SK-N-SH (cell line): ENCODE measurements at regions of chr13 and their contacts with region 1.

Region 1: DNA sequence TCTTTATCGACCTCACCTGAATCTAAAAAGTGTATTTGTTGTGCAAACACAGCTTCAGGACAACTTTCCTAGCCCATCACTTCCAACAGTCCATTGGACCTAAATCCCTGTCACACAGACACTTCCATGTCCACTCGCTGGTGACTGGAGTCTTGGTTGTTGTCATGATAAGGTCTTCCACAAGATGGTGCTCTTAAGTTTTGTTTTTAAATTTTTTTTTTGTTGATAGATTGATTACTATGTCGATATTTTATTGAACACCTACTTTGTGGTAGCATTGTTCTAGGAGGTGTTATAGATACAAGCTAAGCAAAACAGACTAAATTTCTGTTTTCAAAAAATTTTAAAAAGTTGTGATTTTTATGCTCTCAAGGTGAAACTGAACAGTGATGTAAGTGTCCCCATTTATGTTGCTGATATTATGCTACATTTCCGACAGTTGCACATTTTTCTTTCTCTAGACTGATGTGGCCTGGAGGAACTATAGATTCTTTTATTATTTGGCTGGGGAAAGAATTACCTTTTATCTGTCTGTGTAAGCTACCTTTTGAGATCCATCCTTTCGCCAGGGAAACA is 8.1 kb upstream of the ERICH6B start:
- DNase-seq: peak; percentile 39
- H3K4me3 ChIP-seq: no peak overlapping the region; a peak in 1 of 4 replicates
- H3K27ac ChIP-seq: no peak overlapping the region
- H3K4me1 ChIP-seq: peaks cover 0 to 5% of the 10 kb centered on the region in 2 experiments; a peak in 2 of 4 replicates
- H3K27me3 ChIP-seq: no peaks in the 10 kb centered on the region
- CTCF ChIP-seq: peak; percentile 69
- EP300 ChIP-seq: no peak
- RAD21 ChIP-seq: peak; percentile 71

Region 2: GRCh38 chr13:45602183-45603170 is 21.1 kb before region 1 on chr13:
- CTCF ChIA-PET with region 1: interaction called, 10 read pairs
- POLR2A ChIA-PET with region 1: no interaction called
- DNase-seq: peak; percentile 46
- H3K4me3 ChIP-seq: no peak overlapping the region
- H3K27ac ChIP-seq: peak overlapping the region in 1 of 2 experiments; percentile 28; a peak in 1 of 4 replicates
- H3K4me1 ChIP-seq: peaks cover 0 to 10% of the 10 kb centered on the region in 2 experiments; a peak in 1 of 4 replicates
- H3K27me3 ChIP-seq: no peaks in the 10 kb centered on the region
- CTCF ChIP-seq: no peak
- EP300 ChIP-seq: peak in 1 of 2 experiments; percentile 37; a peak in 1 of 4 replicates
- RAD21 ChIP-seq: no peak

Region 3: GRCh38 chr13:45718063-45718462 is 94.5 kb after region 1 on chr13:
- CTCF ChIA-PET with region 1: interaction called, 20 read pairs
- POLR2A ChIA-PET with region 1: no interaction called
- DNase-seq: peak; percentile 48
- H3K4me3 ChIP-seq: no peak overlapping the region
- H3K27ac ChIP-seq: no peak overlapping the region
- H3K4me1 ChIP-seq: no peaks in the 10 kb centered on the region
- H3K27me3 ChIP-seq: no peaks in the 10 kb centered on the region
- CTCF ChIP-seq: peak; percentile 62
- EP300 ChIP-seq: no peak
- RAD21 ChIP-seq: peak; percentile 69

Region 4: DNA sequence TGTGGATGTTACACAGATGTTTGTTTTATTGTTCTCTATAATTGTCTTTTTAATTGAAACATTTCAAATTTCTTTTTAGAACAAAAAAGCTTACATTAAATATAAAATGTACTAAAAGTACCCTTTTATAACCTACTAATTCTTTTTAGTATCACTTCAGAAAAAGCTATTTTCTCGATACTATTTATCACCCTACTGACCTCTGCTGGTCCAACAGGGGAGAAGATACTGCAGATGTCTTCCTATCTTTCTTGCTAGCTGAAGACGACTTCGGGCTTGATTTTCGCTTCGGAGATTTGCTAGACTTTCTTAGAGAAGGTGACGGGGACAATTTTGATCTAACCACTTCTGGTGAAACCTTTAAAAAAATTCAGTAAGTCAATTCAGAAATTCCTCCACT is 386.5 kb after region 1 on chr13:
- CTCF ChIA-PET with region 1: interaction called, 15 read pairs
- POLR2A ChIA-PET with region 1: no interaction called
- DNase-seq: peak; percentile 12
- H3K4me3 ChIP-seq: no peak overlapping the region; a peak in 1 of 4 replicates
- H3K27ac ChIP-seq: no peak overlapping the region
- H3K4me1 ChIP-seq: peaks cover 0 to 6% of the 10 kb centered on the region in 2 experiments; a peak in 1 of 4 replicates
- H3K27me3 ChIP-seq: no peaks in the 10 kb centered on the region
- CTCF ChIP-seq: peak; percentile 59
- EP300 ChIP-seq: no peak
- RAD21 ChIP-seq: peak; percentile 53